ENCODE measurements at regions of chr11 and their contacts with region 1.

Region 1: GRCh38 chr11:114197799-114198500 is 98.2 kb upstream of the NNMT start:
- DNase-seq: no peak
- H3K4me3 ChIP-seq: peak overlapping the region in 3 of 4 donors; percentile 4 to 20 (median 15)
- H3K27ac ChIP-seq: peak overlapping the region; percentile 89 to 98 (median 95)
- H3K4me1 ChIP-seq: peaks cover 92 to 100% (median 97%) of the 10 kb centered on the region in 4 donors
- H3K27me3 ChIP-seq: no peaks in the 10 kb centered on the region
- CTCF ChIP-seq: peak in 1 of 3 experiments; percentile 5
- EP300 ChIP-seq: peak; percentile 99
- POLR2A ChIP-seq: no peak

Region 2: DNA sequence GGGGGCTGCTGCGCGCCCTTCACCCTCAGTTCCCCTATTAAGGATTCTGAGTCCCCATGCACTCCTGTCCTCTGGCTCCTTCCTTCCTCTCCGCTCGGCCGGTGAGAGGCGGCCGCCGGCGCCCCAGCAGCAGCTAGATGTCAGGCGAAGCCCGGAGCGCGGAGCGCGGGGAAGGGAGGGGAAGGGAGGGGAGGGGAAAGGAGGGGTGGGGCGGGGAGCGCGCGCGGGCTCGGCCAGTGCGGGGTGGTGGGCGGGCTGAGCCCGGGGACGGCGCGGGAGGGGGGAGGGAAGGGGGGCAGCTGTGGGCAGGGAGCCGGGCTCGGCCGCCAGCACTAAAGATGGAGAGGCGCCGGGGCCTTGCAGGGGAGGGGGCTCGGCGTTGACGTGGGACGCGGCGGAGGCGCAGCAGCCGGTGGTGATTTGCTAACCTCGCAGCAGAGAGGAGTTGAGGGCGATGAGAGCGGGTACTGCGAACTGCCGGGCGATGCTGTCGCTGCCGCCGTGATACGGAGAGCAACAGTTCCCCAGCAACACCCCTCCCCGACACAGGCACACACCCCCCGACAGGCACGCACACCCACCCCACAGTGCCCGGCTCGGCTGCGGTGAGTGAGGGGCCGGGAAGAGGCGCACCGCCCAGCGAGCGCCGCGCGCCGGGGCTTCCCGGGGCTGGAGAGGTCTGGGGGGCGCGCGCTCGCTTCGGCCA is 138.5 kb before region 1 on chr11 and contains the start of gene ZBTB16:
- intact Hi-C with region 1: loop called (anchors 5 kb)
- DNase-seq: peak; percentile 96
- H3K4me3 ChIP-seq: peak within 1 kb of the TSS; percentile 96 to 99 (median 99)
- H3K27ac ChIP-seq: peak within 1 kb of the TSS; percentile 96 to 100 (median 99)
- H3K4me1 ChIP-seq: peaks cover 39 to 51% (median 47%) of the 10 kb centered on the region in 4 donors
- H3K27me3 ChIP-seq: no peaks in the 10 kb centered on the region
- CTCF ChIP-seq: peak; percentile 60 to 75 (median 65)
- EP300 ChIP-seq: no peak
- POLR2A ChIP-seq: peak; percentile 85
- total RNA-seq, gene ZBTB16: 175 to 319 (median 222) TPM

Region 3: DNA sequence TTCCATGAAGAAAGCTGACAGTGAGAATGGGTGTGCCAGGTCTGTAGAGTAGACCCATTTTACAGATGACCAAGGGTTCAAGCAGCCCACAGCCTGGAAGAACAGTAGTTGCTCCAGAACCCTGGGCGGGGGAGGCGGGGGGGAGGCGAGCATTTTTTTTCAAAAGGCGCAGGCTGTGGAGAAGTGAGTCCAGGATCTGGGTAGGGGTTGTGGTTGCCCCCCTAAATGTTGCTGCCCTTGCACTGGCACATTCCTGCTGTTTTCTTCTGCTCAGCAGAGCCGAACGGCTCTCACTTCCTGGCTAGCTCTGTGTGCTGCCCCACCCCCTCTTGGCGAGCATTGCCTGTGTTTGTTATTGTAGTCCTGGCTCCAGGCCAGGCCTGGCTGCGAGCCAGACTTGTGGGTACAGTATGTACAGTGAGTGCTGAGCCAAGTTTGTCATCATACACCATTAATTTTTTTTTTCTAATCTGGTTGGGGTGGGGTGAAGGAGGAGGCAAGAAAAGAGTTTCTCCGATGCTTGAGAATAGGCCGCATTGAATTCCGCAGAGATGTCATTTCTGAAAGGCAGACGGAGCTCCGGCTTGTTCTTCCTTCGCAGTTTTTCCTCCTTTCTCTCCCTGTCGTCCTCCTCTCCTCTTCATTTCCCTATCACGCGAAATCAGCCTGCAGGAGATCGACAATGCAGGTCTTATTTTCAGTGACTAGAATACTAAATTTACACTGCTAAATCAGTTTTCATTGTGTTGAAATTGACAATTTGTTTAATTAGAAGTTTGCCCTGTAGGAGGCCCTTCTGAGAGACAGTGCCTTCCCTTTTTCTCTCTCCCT is 37.9 kb before region 1 on chr11:
- intact Hi-C with region 1: loop called (anchors 5 kb)
- DNase-seq: peak; percentile 100
- H3K4me3 ChIP-seq: peak overlapping the region; percentile 32 to 49 (median 42)
- H3K27ac ChIP-seq: peak overlapping the region; percentile 97 to 100 (median 98)
- H3K4me1 ChIP-seq: peaks cover 91 to 97% (median 96%) of the 10 kb centered on the region in 4 donors
- H3K27me3 ChIP-seq: no peaks in the 10 kb centered on the region
- CTCF ChIP-seq: no peak
- EP300 ChIP-seq: peak; percentile 99
- POLR2A ChIP-seq: no peak